CD8-positive, alpha-beta T cell (primary cell): ENCODE measurements at regions of chr6 and their contacts with region 1.

Region 1: DNA sequence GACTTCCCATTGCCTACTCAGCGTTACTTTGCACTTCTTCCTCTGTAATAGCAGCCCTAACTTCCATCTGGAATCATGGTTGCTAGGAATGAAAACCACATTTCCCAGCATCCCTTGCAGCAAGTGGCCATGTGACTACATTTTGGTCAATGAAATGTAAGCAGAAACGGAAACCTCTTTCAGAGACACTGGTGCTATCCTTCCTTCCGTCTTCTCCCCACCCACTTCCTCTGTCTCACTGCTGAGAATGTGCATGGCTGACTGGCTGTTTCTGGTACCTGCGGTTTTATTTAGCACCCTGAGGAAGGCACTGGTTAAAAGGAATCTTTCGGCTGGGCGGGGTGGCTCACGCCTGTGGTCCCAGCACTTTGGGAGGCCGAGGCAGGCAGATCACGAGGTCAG is 107.4 kb downstream of the SCML4 start:
- DNase-seq: peak; percentile 46 to 95 (median 76)
- ATAC-seq: peak; percentile 85
- H3K4me3 ChIP-seq: no peak overlapping the region
- H3K4me3 Mint-ChIP-seq: peak overlapping the region; percentile 68
- H3K27ac ChIP-seq: peak overlapping the region in 1 of 2 experiments; percentile 79
- H3K27ac Mint-ChIP-seq: peak overlapping the region; percentile 91
- H3K4me1 ChIP-seq: peaks cover 54% of the 10 kb centered on the region
- H3K4me1 Mint-ChIP-seq: peaks cover 77% of the 10 kb centered on the region
- H3K27me3 ChIP-seq: no peaks in the 10 kb centered on the region
- H3K27me3 Mint-ChIP-seq: no peaks in the 10 kb centered on the region
- CTCF ChIP-seq: no peak

Region 2: GRCh38 chr6:107509506-107509905 is 207.2 kb before region 1 on chr6:
- CTCF ChIA-PET with region 1: no interaction called
- POLR2A ChIA-PET with region 1: no interaction called
- intact Hi-C with region 1: no loop called
- DNase-seq: no peak
- ATAC-seq: no peak
- H3K4me3 ChIP-seq: no peak overlapping the region
- H3K4me3 Mint-ChIP-seq: no peak overlapping the region
- H3K27ac ChIP-seq: no peak overlapping the region
- H3K27ac Mint-ChIP-seq: no peak overlapping the region
- H3K4me1 ChIP-seq: no peaks in the 10 kb centered on the region
- H3K4me1 Mint-ChIP-seq: no peaks in the 10 kb centered on the region
- H3K27me3 ChIP-seq: no peaks in the 10 kb centered on the region
- H3K27me3 Mint-ChIP-seq: no peaks in the 10 kb centered on the region
- CTCF ChIP-seq: no peak

Region 3: GRCh38 chr6:107704347-107705013 is 12.2 kb before region 1 on chr6:
- CTCF ChIA-PET with region 1: interaction called, 11 read pairs
- POLR2A ChIA-PET with region 1: interaction called, 4 read pairs
- intact Hi-C with region 1: no loop called
- DNase-seq: peak in 3 of 9 experiments; percentile 45 to 66 (median 57)
- ATAC-seq: peak; percentile 70
- H3K4me3 ChIP-seq: no peak overlapping the region
- H3K4me3 Mint-ChIP-seq: no peak overlapping the region
- H3K27ac ChIP-seq: peak overlapping the region in 1 of 2 experiments; percentile 32
- H3K27ac Mint-ChIP-seq: peak overlapping the region; percentile 80
- H3K4me1 ChIP-seq: peaks cover 9% of the 10 kb centered on the region
- H3K4me1 Mint-ChIP-seq: peaks cover 49% of the 10 kb centered on the region
- H3K27me3 ChIP-seq: no peaks in the 10 kb centered on the region
- H3K27me3 Mint-ChIP-seq: no peaks in the 10 kb centered on the region
- CTCF ChIP-seq: peak; percentile 77

Region 4: DNA sequence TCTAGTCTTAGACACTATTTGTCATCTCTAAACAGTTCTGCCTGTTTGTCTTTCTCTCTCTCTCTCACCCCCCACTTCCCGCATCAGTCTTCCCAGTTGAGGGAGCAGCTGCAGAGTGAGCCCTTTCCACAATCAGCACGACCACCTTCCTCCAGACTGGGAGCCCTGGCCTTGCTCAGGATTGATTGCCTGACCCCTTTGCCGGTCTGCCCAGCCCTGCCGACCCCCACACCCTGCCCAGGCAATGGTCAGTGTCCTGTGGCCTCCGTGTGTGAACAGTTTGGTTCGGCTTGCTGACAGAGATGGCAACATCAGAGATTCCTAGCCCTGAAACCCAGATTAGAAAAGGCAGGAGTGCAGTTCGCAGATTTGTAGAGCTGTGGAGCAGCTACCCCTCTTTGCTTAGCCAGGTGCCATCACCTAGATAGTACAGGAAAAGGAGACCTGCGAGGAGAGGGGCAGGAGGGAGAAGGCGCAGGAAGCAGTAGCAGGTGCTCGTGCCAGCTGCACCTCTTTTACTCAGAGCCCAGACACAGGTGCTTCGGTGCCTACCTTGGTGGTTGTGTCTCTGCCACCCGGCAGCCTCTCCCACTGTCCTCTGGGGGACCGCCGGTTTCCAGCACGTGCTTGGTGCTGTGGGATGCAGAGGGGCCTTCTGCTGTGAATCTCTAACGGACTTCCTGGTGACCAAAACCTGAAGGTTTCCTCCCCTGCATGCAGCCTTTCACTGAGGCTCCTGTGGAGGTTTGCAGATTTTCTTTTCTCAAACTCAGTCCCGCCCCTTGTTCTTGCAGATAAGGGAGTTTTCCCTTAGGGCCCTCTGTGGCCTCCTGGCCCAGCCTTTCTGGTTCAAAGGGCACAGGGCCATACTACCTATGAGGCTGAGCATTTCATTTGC is 15.0 kb after region 1 on chr6:
- CTCF ChIA-PET with region 1: interaction called, 16 read pairs
- POLR2A ChIA-PET with region 1: interaction called, 4 read pairs
- intact Hi-C with region 1: loop called (anchors 1 to 2 kb)
- DNase-seq: peak in 6 of 9 experiments; percentile 37 to 74 (median 45)
- ATAC-seq: peak; percentile 31
- H3K4me3 ChIP-seq: peak overlapping the region; percentile 73 to 85
- H3K4me3 Mint-ChIP-seq: peak overlapping the region; percentile 88
- H3K27ac ChIP-seq: peak overlapping the region; percentile 43 to 83
- H3K27ac Mint-ChIP-seq: peak overlapping the region; percentile 94
- H3K4me1 ChIP-seq: peaks cover 82% of the 10 kb centered on the region
- H3K4me1 Mint-ChIP-seq: peaks cover 95% of the 10 kb centered on the region
- H3K27me3 ChIP-seq: no peaks in the 10 kb centered on the region
- H3K27me3 Mint-ChIP-seq: no peaks in the 10 kb centered on the region
- CTCF ChIP-seq: no peak

Region 5: GRCh38 chr6:107753778-107754177 is 37.1 kb after region 1 on chr6:
- CTCF ChIA-PET with region 1: no interaction called
- POLR2A ChIA-PET with region 1: no interaction called
- intact Hi-C with region 1: no loop called
- DNase-seq: no peak
- ATAC-seq: no peak
- H3K4me3 ChIP-seq: no peak overlapping the region
- H3K4me3 Mint-ChIP-seq: peak overlapping the region; percentile 23
- H3K27ac ChIP-seq: peak overlapping the region in 1 of 2 experiments; percentile 54
- H3K27ac Mint-ChIP-seq: peak overlapping the region; percentile 86
- H3K4me1 ChIP-seq: peaks cover 34% of the 10 kb centered on the region
- H3K4me1 Mint-ChIP-seq: peaks cover 81% of the 10 kb centered on the region
- H3K27me3 ChIP-seq: no peaks in the 10 kb centered on the region
- H3K27me3 Mint-ChIP-seq: no peaks in the 10 kb centered on the region
- CTCF ChIP-seq: no peak

Region 6: DNA sequence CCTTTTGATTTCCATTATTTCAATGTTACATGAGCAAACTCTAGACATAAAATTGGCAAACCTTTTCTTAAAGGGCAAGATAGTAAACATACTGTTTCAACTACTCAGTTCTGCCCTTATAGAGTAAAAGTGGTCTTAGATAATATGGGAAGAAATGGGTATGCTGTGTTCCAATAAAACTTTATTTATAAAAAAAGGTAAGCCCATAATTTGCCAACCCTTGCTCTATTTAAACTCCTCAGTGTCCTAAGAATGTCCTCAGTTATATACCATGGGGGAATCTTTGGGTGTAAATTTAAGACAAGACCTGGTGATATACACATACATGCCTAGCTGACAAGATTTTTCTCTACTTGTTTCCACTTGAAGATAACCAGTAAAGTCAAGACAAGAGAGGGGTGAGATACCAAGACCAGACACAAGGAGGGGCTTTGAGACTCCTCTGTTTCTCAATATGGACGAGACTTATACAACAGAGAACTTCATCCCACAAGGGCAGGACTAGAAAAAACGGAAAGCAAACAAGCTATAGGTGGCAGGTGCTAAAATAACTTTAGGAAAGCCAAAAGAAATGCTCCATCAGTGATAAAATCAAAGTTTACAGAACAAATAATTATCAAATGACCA is 533.7 kb after region 1 on chr6:
- CTCF ChIA-PET with region 1: no interaction called
- POLR2A ChIA-PET with region 1: no interaction called
- intact Hi-C with region 1: loop called in 1 of 2 experiments (anchors 10 kb)
- DNase-seq: peak in 2 of 9 experiments; percentile 22 to 48
- ATAC-seq: peak; percentile 57
- H3K4me3 ChIP-seq: no peak overlapping the region
- H3K4me3 Mint-ChIP-seq: no peak overlapping the region
- H3K27ac ChIP-seq: no peak overlapping the region
- H3K27ac Mint-ChIP-seq: no peak overlapping the region
- H3K4me1 ChIP-seq: peaks cover 6% of the 10 kb centered on the region
- H3K4me1 Mint-ChIP-seq: peaks cover 57% of the 10 kb centered on the region
- H3K27me3 ChIP-seq: no peaks in the 10 kb centered on the region
- H3K27me3 Mint-ChIP-seq: no peaks in the 10 kb centered on the region
- CTCF ChIP-seq: no peak